ENCODE measurements at regions of chr15 and their contacts with region 1.

Region 1: DNA sequence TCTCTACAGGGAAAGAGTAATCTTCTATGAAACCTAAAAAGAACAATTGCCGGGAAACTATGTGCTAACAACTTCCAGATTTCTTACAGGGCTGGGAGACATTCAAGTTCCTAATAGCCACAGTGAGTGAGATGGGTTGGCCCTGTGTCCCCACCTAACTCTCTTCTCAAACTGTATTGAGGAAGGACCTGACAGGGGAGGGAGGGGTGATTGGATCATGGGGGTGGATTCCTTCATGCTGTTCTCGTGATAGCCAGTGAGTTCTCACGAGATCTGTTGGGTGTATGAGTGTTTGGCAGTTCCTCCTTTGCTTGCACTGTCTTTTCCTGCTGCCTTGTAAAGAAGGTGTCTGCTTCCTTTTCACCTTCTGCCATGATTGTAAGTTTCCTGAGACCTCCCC is 958.7 kb downstream of the AGBL1 start:
- DNase-seq: no peak
- H3K4me3 ChIP-seq: no peak overlapping the region
- H3K27ac ChIP-seq: no peak overlapping the region
- H3K27me3 ChIP-seq: no peaks in the 10 kb centered on the region
- CTCF ChIP-seq: no peak

Region 2: GRCh38 chr15:86813907-86814306 is 224.5 kb before region 1 on chr15:
- intact Hi-C with region 1: no loop called
- DNase-seq: no peak
- H3K4me3 ChIP-seq: no peak overlapping the region
- H3K27ac ChIP-seq: no peak overlapping the region
- H3K27me3 ChIP-seq: peaks cover 0 to 7% (median 0%) of the 10 kb centered on the region in 45 donors
- CTCF ChIP-seq: no peak

Region 3: DNA sequence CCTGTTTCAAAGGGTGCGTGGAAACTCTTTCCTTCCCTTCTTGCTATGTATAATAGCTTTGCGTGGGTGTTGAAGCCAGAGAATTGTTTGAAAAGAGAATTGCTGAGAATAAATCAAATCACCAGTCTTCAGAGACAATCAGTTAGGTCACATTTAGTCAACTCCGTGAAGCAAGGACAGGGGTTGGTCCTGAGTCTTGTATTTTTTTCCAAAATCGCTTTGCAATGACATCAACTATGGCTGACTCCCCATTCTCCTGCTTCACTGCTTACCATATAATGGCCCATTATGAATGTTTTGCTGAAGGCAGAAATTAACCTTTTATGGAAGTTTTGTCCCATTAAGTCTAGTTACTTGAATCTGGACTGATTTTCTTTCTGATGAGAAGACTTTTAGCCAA is 105.9 kb before region 1 on chr15:
- intact Hi-C with region 1: loop called in 1 of 2 experiments (anchors 5 kb)
- DNase-seq: no peak
- H3K4me3 ChIP-seq: no peak overlapping the region
- H3K27ac ChIP-seq: no peak overlapping the region
- H3K27me3 ChIP-seq: no peaks in the 10 kb centered on the region
- CTCF ChIP-seq: no peak

Measured in dorsolateral prefrontal cortex (tissue), 120 donors.